Right ventricle myocardium inferior (tissue), 1 donor: ENCODE measurements at regions of chr4 and their contacts with region 1.

Region 1: GRCh38 chr4:105990939-105991338 is 95.7 kb downstream of the NPNT start:
- DNase-seq: peak; percentile 85
- ATAC-seq: peak; percentile 96

Region 2: GRCh38 chr4:105944540-105944939 is 46.4 kb before region 1 on chr4:
- intact Hi-C with region 1: loop called (anchors 10 kb)
- DNase-seq: no peak
- ATAC-seq: peak; percentile 37

Region 3: DNA sequence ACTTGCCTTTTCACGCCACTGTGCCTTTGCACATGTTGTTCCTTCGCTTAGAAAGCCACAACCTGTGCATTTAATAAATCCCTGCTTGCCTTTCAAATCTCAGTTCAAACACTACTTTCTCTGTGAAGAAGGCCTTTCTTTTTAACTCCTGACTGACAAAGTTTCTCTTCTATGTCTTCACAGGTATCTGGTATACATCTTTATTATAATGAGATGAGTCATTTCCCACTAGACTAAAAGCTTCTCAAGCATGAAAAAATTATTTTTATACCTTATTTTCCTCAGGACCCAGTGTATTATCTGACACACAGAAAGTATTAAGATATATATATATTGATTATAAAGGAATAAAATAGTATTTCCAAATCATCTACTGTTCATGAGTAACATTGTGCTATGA is 135.1 kb after region 1 on chr4:
- intact Hi-C with region 1: no loop called
- DNase-seq: no peak
- ATAC-seq: no peak